CD14-positive monocyte (primary cell): ENCODE measurements at regions of chr5 and their contacts with region 1.

Region 1: DNA sequence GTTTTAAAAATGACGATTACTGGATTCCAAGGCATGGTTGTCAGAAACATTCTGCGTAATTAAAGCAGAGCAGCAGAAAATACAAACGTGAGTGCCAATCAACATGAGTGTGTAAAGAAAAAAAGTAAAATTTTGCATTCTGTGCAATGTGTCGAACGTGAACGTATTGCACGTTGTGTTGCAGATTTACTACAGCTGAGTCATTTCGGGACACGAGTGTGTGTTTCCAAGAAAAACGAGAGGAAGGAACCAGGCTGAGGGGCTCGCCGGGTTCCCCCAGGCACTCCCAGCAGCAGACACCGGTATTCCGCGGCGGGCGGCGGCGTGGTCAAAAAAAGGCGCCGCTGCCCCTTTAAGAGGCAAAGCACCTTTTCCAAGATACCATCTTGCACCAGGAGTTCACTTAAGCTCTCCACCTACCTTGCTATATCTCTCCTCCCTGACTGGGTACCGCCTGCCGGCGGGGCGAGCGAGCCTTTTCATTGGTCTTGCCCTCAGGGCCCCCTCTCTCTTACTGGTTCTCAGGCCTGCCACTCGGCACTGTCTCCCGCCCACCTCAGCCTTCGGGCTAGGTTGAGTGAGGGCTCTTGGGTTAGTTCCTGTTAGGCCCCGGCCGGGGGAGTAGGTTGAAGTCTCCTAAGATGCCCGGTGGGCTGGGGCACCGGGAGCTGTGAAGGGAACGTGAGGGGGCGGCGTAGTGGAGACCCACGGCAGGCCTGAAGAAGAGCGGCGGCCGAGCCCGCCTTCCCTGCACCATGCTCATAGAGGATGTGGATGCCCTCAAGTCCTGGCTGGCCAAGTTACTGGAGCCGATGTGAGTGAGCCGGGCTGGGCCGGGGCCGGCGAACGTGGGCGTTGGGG is at the start of gene RBM27:
- DNase-seq: peak; percentile 95 to 97 (median 96)
- H3K4me3 ChIP-seq: peak within 1 kb of the TSS; percentile 78 to 88 (median 87)
- H3K4me3 Mint-ChIP-seq: no peak within 1 kb of the TSS
- H3K27ac ChIP-seq: peak within 1 kb of the TSS; percentile 50 to 77
- H3K27ac Mint-ChIP-seq: no peak within 1 kb of the TSS
- H3K4me1 ChIP-seq: peaks cover 21 to 28% of the 10 kb centered on the region in 2 donors
- H3K4me1 Mint-ChIP-seq: peaks cover 12% of the 10 kb centered on the region
- H3K27me3 ChIP-seq: no peaks in the 10 kb centered on the region
- H3K27me3 Mint-ChIP-seq: no peaks in the 10 kb centered on the region
- CTCF ChIP-seq: no peak
- polyA plus RNA-seq, gene RBM27: 2.5 to 6.2 (median 3.9) TPM

Region 2: GRCh38 chr5:146188358-146188757 is 14.9 kb before region 1 on chr5:
- intact Hi-C with region 1: loop called (anchors 2 kb)
- DNase-seq: no peak
- H3K4me3 ChIP-seq: no peak overlapping the region
- H3K4me3 Mint-ChIP-seq: no peak overlapping the region
- H3K27ac ChIP-seq: no peak overlapping the region
- H3K27ac Mint-ChIP-seq: no peak overlapping the region
- H3K4me1 ChIP-seq: peaks cover 0 to 3% of the 10 kb centered on the region in 2 donors
- H3K4me1 Mint-ChIP-seq: peaks cover 2% of the 10 kb centered on the region
- H3K27me3 ChIP-seq: no peaks in the 10 kb centered on the region
- H3K27me3 Mint-ChIP-seq: peaks cover 8 to 14% (median 9%) of the 10 kb centered on the region in 3 donors
- CTCF ChIP-seq: no peak

Region 3: GRCh38 chr5:146446853-146447733 is 243.9 kb after region 1 on chr5 and contains the start of gene TCERG1:
- intact Hi-C with region 1: loop called in 1 of 2 experiments (anchors 10 kb)
- DNase-seq: peak; percentile 99 to 100 (median 99)
- H3K4me3 ChIP-seq: peak within 1 kb of the TSS; percentile 88 to 94 (median 90)
- H3K4me3 Mint-ChIP-seq: peak within 1 kb of the TSS; percentile 95 to 98
- H3K27ac ChIP-seq: peak within 1 kb of the TSS; percentile 92 to 96
- H3K27ac Mint-ChIP-seq: peak within 1 kb of the TSS; percentile 96 to 100 (median 97)
- H3K4me1 ChIP-seq: peaks cover 19 to 32% of the 10 kb centered on the region in 2 donors
- H3K4me1 Mint-ChIP-seq: peaks cover 35% of the 10 kb centered on the region
- H3K27me3 ChIP-seq: no peaks in the 10 kb centered on the region
- H3K27me3 Mint-ChIP-seq: peaks cover 0 to 2% (median 2%) of the 10 kb centered on the region in 3 donors
- CTCF ChIP-seq: peak; percentile 79
- polyA plus RNA-seq, gene TCERG1: 11.6 to 37.3 (median 18.0) TPM